ENCODE measurements at regions of chr4 and their contacts with region 1.

Region 1: DNA sequence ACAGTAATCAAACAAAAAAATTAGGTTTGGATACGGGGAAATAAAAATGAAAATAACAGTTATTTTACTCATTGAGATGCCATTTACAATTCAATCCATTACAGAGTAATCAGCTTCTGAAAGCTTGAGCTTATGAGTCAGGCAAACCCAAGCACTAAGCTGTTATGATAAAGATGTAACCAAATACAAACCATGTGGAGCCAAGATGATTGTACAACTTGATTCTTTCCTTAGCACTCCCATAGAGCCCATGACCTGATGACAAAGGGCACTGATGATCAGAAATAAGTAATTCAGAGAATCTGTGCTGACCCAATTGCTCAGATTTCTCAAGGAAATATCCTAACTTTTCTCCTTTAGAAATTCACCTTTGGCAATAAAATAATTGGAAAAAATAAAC is 40.5 kb upstream of the PRKG2 start:
- DNase-seq: no peak
- H3K4me3 ChIP-seq: no peak overlapping the region
- H3K4me3 Mint-ChIP-seq: no peak overlapping the region
- H3K27ac Mint-ChIP-seq: no peak overlapping the region
- H3K4me1 ChIP-seq: peaks cover 36% of the 10 kb centered on the region
- H3K4me1 Mint-ChIP-seq: peaks cover 19% of the 10 kb centered on the region
- H3K27me3 ChIP-seq: no peaks in the 10 kb centered on the region
- H3K27me3 Mint-ChIP-seq: no peaks in the 10 kb centered on the region
- CTCF ChIP-seq: no peak

Region 2: GRCh38 chr4:81304871-81305270 is 49.3 kb after region 1 on chr4:
- CTCF ChIA-PET with region 1: no interaction called
- POLR2A ChIA-PET with region 1: no interaction called
- intact Hi-C with region 1: no loop called
- DNase-seq: no peak
- H3K4me3 ChIP-seq: no peak overlapping the region
- H3K4me3 Mint-ChIP-seq: no peak overlapping the region
- H3K27ac Mint-ChIP-seq: no peak overlapping the region
- H3K4me1 ChIP-seq: no peaks in the 10 kb centered on the region
- H3K4me1 Mint-ChIP-seq: no peaks in the 10 kb centered on the region
- H3K27me3 ChIP-seq: no peaks in the 10 kb centered on the region
- H3K27me3 Mint-ChIP-seq: no peaks in the 10 kb centered on the region
- CTCF ChIP-seq: no peak

Region 3: GRCh38 chr4:81326581-81326980 is 71.1 kb after region 1 on chr4:
- CTCF ChIA-PET with region 1: no interaction called
- POLR2A ChIA-PET with region 1: no interaction called
- intact Hi-C with region 1: loop called (anchors 5 kb)
- DNase-seq: no peak
- H3K4me3 ChIP-seq: no peak overlapping the region
- H3K4me3 Mint-ChIP-seq: no peak overlapping the region
- H3K27ac Mint-ChIP-seq: no peak overlapping the region
- H3K4me1 ChIP-seq: peaks cover 13% of the 10 kb centered on the region; the same call in 1 of the 2 replicates
- H3K4me1 Mint-ChIP-seq: peaks cover 15% of the 10 kb centered on the region
- H3K27me3 ChIP-seq: no peaks in the 10 kb centered on the region
- H3K27me3 Mint-ChIP-seq: no peaks in the 10 kb centered on the region
- CTCF ChIP-seq: no peak

Measured in Caco-2 (cell line).